Naive thymus-derived CD8-positive, alpha-beta T cell (primary cell): ENCODE measurements at regions of chr3 and their contacts with region 1.

Region 1: GRCh38 chr3:72258361-72259141 is 473.6 kb upstream of the PROK2 start:
- DNase-seq: peak in 4 of 10 donors; percentile 12 to 66 (median 28)
- ATAC-seq: peak; percentile 27 to 54
- H3K4me3 Mint-ChIP-seq: peak overlapping the region; percentile 7 to 83 (median 71)
- H3K27ac Mint-ChIP-seq: peak overlapping the region; percentile 43 to 89 (median 72)
- H3K4me1 Mint-ChIP-seq: peaks cover 14 to 52% (median 48%) of the 10 kb centered on the region in 4 donors
- H3K27me3 Mint-ChIP-seq: peaks cover 0 to 1% (median 0%) of the 10 kb centered on the region in 5 donors

Region 2: GRCh38 chr3:72270072-72270681 is 11.6 kb after region 1 on chr3:
- POLR2A ChIA-PET with region 1: interaction called, 13 read pairs
- DNase-seq: no peak
- ATAC-seq: no peak
- H3K4me3 Mint-ChIP-seq: peak overlapping the region in 2 of 10 donors; percentile 24
- H3K27ac Mint-ChIP-seq: peak overlapping the region in 2 of 10 donors; percentile 25 to 51
- H3K4me1 Mint-ChIP-seq: peaks cover 8 to 82% (median 48%) of the 10 kb centered on the region in 4 donors
- H3K27me3 Mint-ChIP-seq: peaks cover 0 to 1% (median 0%) of the 10 kb centered on the region in 5 donors

Region 3: DNA sequence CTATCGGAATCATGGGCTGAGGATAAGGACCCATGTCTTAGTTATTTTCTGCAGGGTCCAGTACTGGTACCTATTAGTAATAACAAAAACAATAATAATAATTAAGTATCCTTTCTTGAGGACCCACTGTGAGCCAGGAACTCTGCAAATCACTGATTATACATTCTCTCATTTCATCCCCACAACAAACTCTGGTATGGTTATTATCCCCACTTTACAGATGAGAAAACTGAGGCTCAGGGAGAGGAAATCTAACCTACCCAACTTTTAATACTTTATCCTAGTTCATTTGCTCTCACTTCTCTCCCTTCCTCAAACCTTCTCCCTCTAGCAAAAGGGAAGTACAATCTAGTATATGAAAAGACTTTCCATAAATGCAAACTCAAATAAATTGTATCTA is 54.8 kb after region 1 on chr3:
- POLR2A ChIA-PET with region 1: no interaction called
- DNase-seq: no peak
- ATAC-seq: no peak
- H3K4me3 Mint-ChIP-seq: peak overlapping the region in 1 of 10 donors; percentile 12
- H3K27ac Mint-ChIP-seq: no peak overlapping the region
- H3K4me1 Mint-ChIP-seq: peaks cover 6 to 41% (median 23%) of the 10 kb centered on the region in 4 donors
- H3K27me3 Mint-ChIP-seq: peaks cover 0 to 4% (median 0%) of the 10 kb centered on the region in 5 donors